MCF 10A (cell line): ENCODE measurements at regions of chr3 and their contacts with region 1.

Region 1: GRCh38 chr3:187679638-187680396 is 9.6 kb upstream of the SST start:
- DNase-seq: peak; percentile 78
- H3K4me3 Mint-ChIP-seq: no peak overlapping the region
- H3K27ac Mint-ChIP-seq: no peak overlapping the region
- H3K4me1 Mint-ChIP-seq: no peaks in the 10 kb centered on the region
- H3K27me3 Mint-ChIP-seq: peaks cover 69% of the 10 kb centered on the region
- CTCF ChIP-seq: peak; percentile 84

Region 2: DNA sequence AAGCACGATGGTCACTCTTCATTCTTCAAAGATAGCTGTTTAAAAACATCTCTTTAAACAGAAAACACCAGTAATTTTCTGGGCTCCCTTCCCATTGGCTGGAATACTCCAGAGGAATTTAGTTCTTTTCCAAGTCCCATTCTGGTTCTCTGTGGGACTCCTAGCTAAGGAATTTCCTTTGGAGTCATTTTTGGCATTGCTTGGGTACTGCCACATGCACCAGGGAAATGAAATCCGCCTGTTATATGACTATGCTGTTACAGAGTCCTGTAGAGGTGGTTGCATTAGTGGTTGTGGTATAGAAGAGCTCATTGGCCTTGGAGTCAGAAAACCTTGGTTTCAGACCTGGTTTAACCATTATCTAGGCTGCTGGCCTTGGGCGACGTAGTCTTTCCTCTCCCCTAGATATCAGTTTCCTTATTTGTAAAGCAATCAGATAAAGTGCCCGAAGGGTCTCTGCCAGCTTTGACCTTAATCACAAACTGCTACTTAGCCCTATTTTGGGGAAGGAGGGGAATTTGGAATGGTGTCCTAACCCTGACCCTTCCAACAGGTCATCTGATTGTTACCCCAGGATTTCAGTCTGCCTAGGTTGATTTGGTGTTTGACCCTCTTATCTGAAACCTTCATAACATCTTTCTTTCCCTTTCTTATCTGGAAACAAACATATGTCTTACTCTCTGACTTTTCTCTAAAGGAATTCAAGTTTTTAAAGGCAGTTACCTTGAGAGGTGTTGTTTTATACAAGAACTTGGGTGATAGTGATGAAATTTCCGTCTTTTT is 469.1 kb before region 1 on chr3:
- CTCF ChIA-PET with region 1: interaction called, 14 read pairs
- POLR2A ChIA-PET with region 1: no interaction called
- intact Hi-C with region 1: no loop called
- DNase-seq: no peak
- H3K4me3 Mint-ChIP-seq: no peak overlapping the region
- H3K27ac Mint-ChIP-seq: no peak overlapping the region
- H3K4me1 Mint-ChIP-seq: peaks cover 35% of the 10 kb centered on the region
- H3K27me3 Mint-ChIP-seq: no peaks in the 10 kb centered on the region
- CTCF ChIP-seq: no peak

Region 3: DNA sequence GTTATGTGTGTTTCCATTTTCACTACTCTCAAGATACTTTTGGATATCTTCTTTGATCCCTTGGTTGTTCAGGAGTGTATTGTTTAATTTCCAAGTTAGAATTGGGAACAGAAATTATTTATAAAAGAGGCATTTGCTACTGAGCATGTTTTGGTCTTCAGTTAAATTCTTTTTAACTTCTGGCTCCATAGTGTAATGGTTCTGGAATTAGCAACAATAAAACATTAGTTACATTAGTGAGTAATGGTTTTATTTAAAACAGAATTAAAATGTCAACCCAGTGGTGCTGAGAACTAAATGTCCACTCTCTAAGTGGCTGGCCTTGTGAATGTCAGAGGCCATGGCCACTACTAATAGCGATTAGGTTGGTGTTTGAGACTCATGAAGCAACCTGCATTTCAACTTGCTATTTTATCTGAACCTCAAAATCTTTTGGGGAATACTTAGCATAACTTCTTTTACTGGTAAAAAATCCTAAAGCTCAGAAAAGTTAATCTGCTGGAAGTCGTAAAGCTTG is 368.8 kb before region 1 on chr3:
- CTCF ChIA-PET with region 1: interaction called, 629 read pairs
- POLR2A ChIA-PET with region 1: interaction called, 6 read pairs
- intact Hi-C with region 1: no loop called
- DNase-seq: no peak
- H3K4me3 Mint-ChIP-seq: no peak overlapping the region
- H3K27ac Mint-ChIP-seq: no peak overlapping the region
- H3K4me1 Mint-ChIP-seq: no peaks in the 10 kb centered on the region
- H3K27me3 Mint-ChIP-seq: peaks cover 96% of the 10 kb centered on the region
- CTCF ChIP-seq: no peak

Region 4: DNA sequence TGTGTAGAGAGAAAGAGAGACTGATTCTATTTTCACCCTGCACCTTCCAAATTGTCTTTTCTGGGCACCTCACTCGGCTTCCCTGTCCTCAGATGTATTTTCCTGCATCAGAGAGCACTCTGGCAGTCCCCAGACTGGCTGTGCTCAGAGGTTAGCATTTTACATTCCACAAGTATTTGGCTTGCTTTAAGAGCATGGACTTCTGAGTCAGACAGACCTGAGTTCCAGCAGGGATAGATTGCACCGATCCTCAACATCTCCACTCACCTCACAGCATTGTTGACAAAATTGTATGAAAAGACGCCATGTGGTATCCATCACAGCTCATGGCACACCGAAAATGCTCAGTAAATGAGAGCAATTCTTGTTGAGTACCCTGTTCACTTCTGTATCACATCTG is 55.2 kb before region 1 on chr3:
- CTCF ChIA-PET with region 1: interaction called, 61 read pairs
- POLR2A ChIA-PET with region 1: no interaction called
- intact Hi-C with region 1: no loop called
- DNase-seq: no peak
- H3K4me3 Mint-ChIP-seq: no peak overlapping the region
- H3K27ac Mint-ChIP-seq: no peak overlapping the region
- H3K4me1 Mint-ChIP-seq: peaks cover 13% of the 10 kb centered on the region
- H3K27me3 Mint-ChIP-seq: peaks cover 22% of the 10 kb centered on the region
- CTCF ChIP-seq: no peak

Region 5: GRCh38 chr3:187705164-187705563 is 25.3 kb after region 1 on chr3:
- CTCF ChIA-PET with region 1: interaction called, 39 read pairs
- POLR2A ChIA-PET with region 1: no interaction called
- intact Hi-C with region 1: no loop called
- DNase-seq: no peak
- H3K4me3 Mint-ChIP-seq: no peak overlapping the region
- H3K27ac Mint-ChIP-seq: no peak overlapping the region
- H3K4me1 Mint-ChIP-seq: no peaks in the 10 kb centered on the region
- H3K27me3 Mint-ChIP-seq: no peaks in the 10 kb centered on the region
- CTCF ChIP-seq: no peak

Region 6: DNA sequence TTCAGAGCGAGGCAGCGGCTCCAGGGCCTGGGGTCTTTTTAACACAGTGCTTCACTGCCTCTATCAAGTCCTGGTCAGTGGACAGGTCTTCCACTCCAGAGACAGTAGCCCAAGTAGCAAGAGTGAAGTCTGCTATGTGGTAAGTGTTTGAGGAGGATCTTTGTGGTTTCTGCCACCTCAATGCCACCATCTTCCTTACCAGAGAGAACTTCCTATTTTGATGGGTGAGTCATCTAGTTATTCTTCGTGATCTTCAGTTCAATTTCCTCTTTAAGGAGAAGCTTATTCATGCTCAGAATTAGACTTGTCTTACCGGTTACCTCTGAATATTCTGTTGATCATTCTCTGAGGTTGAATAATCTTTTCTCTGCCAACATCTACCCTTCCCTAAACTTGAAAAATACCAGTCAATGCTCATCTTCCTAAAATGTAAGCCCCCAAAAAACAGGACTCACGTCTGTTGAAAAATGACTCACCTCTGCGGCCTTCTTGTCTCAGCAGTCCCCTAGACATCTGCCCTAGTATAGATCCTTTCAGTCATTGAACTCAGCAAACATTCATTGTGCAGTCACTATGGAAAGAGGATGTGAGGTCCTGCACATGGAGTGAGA is 97.6 kb after region 1 on chr3:
- CTCF ChIA-PET with region 1: no interaction called
- POLR2A ChIA-PET with region 1: no interaction called
- intact Hi-C with region 1: no loop called
- DNase-seq: no peak
- H3K4me3 Mint-ChIP-seq: no peak overlapping the region
- H3K27ac Mint-ChIP-seq: peak overlapping the region; percentile 31
- H3K4me1 Mint-ChIP-seq: peaks cover 7% of the 10 kb centered on the region
- H3K27me3 Mint-ChIP-seq: no peaks in the 10 kb centered on the region
- CTCF ChIP-seq: no peak